Transverse colon (tissue), 4 donors: ENCODE measurements at regions of chr3 and their contacts with region 1.

Region 1: DNA sequence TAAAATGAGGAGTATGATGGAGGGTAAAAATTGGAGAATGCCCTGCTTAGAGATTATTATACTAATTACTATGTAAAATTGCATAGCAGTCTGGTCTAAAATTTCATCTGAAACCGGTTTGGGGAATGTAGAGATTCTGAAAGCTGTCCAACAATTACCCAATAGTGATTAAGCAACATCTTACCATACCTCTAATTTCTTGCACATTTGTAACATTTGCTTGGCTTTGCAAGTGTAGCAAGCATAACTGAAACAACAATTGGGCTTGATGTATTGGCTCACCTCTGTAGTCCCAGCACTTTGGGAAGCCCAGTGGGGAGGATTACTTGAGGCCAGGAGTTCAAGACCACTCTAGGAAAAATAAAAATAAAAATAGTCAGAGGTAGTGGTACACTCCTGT is 17.4 kb downstream of the AADACL2 start:
- DNase-seq: no peak
- H3K4me3 ChIP-seq: no peak overlapping the region
- H3K27ac ChIP-seq: no peak overlapping the region
- H3K4me1 ChIP-seq: no peaks in the 10 kb centered on the region
- H3K27me3 ChIP-seq: no peaks in the 10 kb centered on the region
- CTCF ChIP-seq: no peak
- EP300 ChIP-seq: no peak
- POLR2A ChIP-seq: no peak

Region 2: DNA sequence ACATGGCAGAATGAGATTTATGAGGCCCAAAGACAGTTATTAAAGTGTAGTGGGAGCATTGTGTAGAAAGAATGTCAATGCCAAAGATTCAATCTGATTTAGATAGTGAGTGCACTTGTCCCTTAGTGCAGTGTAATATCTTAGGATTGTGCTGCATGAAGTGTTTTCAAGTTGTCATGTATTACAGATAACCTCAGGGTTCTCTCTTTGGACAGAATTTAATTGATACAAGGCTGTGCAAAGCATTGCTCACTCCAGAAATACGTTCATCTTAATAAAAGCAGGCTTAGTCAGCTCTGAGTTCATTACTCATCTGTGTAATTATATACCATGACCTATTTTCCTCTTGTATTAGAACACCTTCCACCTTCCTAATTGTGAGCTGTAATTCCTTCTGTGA is 532.1 kb before region 1 on chr3:
- in situ Hi-C with region 1: no loop called
- intact Hi-C with region 1: no loop called
- DNase-seq: no peak
- H3K4me3 ChIP-seq: no peak overlapping the region
- H3K27ac ChIP-seq: no peak overlapping the region
- H3K4me1 ChIP-seq: peaks cover 0 to 4% (median 0%) of the 10 kb centered on the region in 4 donors
- H3K27me3 ChIP-seq: no peaks in the 10 kb centered on the region
- CTCF ChIP-seq: no peak
- EP300 ChIP-seq: no peak
- POLR2A ChIP-seq: no peak

Region 3: GRCh38 chr3:151724576-151725562 is 26.3 kb before region 1 on chr3:
- in situ Hi-C with region 1: no loop called
- intact Hi-C with region 1: loop called (anchors 1 kb)
- DNase-seq: no peak
- H3K4me3 ChIP-seq: no peak overlapping the region
- H3K27ac ChIP-seq: no peak overlapping the region
- H3K4me1 ChIP-seq: no peaks in the 10 kb centered on the region
- H3K27me3 ChIP-seq: no peaks in the 10 kb centered on the region
- CTCF ChIP-seq: no peak
- EP300 ChIP-seq: no peak
- POLR2A ChIP-seq: no peak

Region 4: DNA sequence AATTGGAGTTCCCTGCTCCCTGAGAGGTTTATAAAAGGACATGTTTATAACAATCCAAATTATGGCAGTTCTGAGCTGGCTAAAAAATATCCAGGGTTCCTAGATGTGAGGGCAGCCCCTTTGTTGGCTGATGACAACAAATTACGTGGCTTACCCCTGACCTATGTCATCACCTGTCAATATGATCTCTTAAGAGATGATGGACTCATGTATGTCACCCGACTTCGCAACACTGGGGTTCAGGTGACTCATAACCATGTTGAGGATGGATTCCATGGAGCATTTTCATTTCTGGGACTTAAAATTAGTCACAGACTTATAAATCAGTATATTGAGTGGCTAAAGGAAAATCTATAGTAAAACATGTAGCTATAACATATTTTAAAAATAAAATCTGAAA is 76.7 kb after region 1 on chr3:
- in situ Hi-C with region 1: no loop called
- intact Hi-C with region 1: no loop called
- DNase-seq: no peak
- H3K4me3 ChIP-seq: no peak overlapping the region
- H3K27ac ChIP-seq: no peak overlapping the region
- H3K4me1 ChIP-seq: no peaks in the 10 kb centered on the region
- H3K27me3 ChIP-seq: no peaks in the 10 kb centered on the region
- CTCF ChIP-seq: no peak
- EP300 ChIP-seq: no peak
- POLR2A ChIP-seq: no peak